B cell (primary cell): ENCODE measurements at regions of chr1 and their contacts with region 1.

Region 1: GRCh38 chr1:203818399-203818798 is 23.0 kb downstream of the ZBED6 start:
- DNase-seq: peak; percentile 53
- ATAC-seq: peak; percentile 49
- H3K4me3 ChIP-seq: no peak overlapping the region
- H3K4me3 Mint-ChIP-seq: peak overlapping the region; percentile 47
- H3K27ac ChIP-seq: peak overlapping the region in 1 of 2 donors; percentile 59
- H3K27ac Mint-ChIP-seq: peak overlapping the region; percentile 85
- H3K4me1 ChIP-seq: no peaks in the 10 kb centered on the region
- H3K4me1 Mint-ChIP-seq: peaks cover 14% of the 10 kb centered on the region
- H3K27me3 ChIP-seq: no peaks in the 10 kb centered on the region
- H3K27me3 Mint-ChIP-seq: no peaks in the 10 kb centered on the region
- CTCF ChIP-seq: no peak

Region 2: GRCh38 chr1:205091043-205091740 is 1272.8 kb after region 1 on chr1:
- CTCF ChIA-PET with region 1: no interaction called
- POLR2A ChIA-PET with region 1: no interaction called
- intact Hi-C with region 1: loop called (anchors 10 kb)
- DNase-seq: no peak
- ATAC-seq: no peak
- H3K4me3 ChIP-seq: no peak overlapping the region
- H3K4me3 Mint-ChIP-seq: no peak overlapping the region
- H3K27ac ChIP-seq: no peak overlapping the region
- H3K27ac Mint-ChIP-seq: no peak overlapping the region
- H3K4me1 ChIP-seq: no peaks in the 10 kb centered on the region
- H3K4me1 Mint-ChIP-seq: no peaks in the 10 kb centered on the region
- H3K27me3 ChIP-seq: no peaks in the 10 kb centered on the region
- H3K27me3 Mint-ChIP-seq: no peaks in the 10 kb centered on the region
- CTCF ChIP-seq: no peak